CD8-positive, alpha-beta T cell (primary cell): ENCODE measurements at regions of chr19 and their contacts with region 1.

Region 1: DNA sequence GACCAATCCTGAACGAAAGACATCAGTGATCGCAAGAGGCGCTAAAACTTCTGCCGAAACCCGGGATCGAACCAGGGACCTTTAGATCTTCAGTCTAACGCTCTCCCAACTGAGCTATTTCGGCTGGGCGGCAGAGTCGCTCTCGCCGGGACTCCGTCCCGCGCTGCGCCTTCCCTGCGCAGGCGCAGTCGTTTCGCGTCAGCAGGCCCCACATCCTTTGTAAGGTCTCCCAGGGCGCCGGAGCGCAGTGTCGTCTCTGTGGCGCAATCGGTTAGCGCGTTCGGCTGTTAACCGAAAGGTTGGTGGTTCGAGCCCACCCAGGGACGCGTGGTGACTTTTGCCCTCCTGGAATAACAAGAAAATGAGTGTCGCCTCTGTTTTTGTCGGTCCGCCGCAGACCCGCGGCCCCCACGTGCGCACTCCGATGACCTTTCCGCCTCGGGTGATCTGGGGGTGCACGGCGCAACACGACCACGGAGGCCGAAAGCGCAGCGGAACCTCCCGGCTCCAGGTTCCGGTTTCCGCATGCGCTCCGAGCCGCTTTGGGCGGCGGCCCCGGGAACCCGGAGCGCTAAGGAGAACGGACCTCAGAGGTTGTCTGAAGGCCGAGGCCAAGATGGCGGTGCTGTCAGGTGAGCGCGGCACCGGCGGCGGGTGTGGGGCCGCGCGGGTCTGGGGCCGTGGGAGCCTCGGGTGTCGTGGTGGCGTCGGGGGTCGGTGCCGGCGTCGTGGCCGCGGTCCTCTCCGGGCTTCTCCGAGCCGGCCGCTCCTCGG is at the start of gene NDUFS7:
- DNase-seq: peak; percentile 91 to 100 (median 95)
- ATAC-seq: peak; percentile 90
- H3K4me3 ChIP-seq: peak within 1 kb of the TSS; percentile 93 to 94
- H3K4me3 Mint-ChIP-seq: peak within 1 kb of the TSS; percentile 94
- H3K27ac ChIP-seq: peak within 1 kb of the TSS; percentile 72 to 91
- H3K27ac Mint-ChIP-seq: peak within 1 kb of the TSS; percentile 99
- H3K4me1 ChIP-seq: peaks cover 10% of the 10 kb centered on the region
- H3K4me1 Mint-ChIP-seq: peaks cover 16% of the 10 kb centered on the region
- H3K27me3 ChIP-seq: no peaks in the 10 kb centered on the region
- H3K27me3 Mint-ChIP-seq: peaks cover 2% of the 10 kb centered on the region
- CTCF ChIP-seq: no peak
- total RNA-seq, gene NDUFS7: 38.6 to 41.1 TPM

Region 2: DNA sequence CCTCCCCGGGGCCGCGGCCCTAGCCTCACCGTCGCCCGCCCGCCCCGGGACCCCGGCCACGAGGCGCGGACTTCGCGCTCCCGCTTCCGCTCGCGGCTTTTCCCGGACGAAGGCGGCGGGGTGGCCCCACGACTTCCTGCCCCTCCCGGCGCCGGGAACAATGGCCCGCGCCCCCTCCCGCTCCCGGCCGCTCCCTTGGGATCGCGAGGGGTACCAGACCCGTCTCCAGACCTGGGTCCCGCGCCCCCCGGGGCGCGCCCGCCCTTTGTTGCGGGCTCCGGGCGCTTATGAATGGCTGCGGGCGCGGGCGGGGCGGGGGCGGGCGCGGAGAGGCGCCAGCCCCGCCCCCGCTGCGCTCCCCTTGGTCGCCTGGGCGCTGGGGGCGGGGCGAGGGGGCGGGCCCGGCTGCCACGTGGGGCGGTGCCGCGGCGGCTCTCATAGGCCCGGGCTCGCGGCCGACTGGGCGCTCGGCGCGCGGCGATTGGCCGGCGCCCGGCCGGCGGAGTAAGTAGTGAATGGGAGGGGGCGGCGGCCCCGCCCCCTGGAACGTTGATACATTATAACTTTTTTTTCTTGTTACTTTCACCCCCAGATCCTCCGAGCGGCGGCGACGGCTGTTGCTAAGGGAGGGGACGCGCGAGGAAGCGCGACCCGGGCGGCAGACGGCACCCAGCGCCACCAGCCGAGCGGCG is 134.1 kb before region 1 on chr19:
- CTCF ChIA-PET with region 1: interaction called, 4 read pairs
- POLR2A ChIA-PET with region 1: no interaction called
- intact Hi-C with region 1: loop called in 1 of 2 experiments (anchors 2 kb)
- DNase-seq: peak; percentile 89 to 98 (median 95)
- ATAC-seq: peak; percentile 55
- H3K4me3 ChIP-seq: peak overlapping the region; percentile 86 to 88
- H3K4me3 Mint-ChIP-seq: peak overlapping the region; percentile 87
- H3K27ac ChIP-seq: peak overlapping the region; percentile 83 to 84
- H3K27ac Mint-ChIP-seq: peak overlapping the region; percentile 88
- H3K4me1 ChIP-seq: peaks cover 31% of the 10 kb centered on the region
- H3K4me1 Mint-ChIP-seq: peaks cover 10% of the 10 kb centered on the region
- H3K27me3 ChIP-seq: no peaks in the 10 kb centered on the region
- H3K27me3 Mint-ChIP-seq: no peaks in the 10 kb centered on the region
- CTCF ChIP-seq: no peak

Region 3: GRCh38 chr19:1355568-1356507 is 27.7 kb before region 1 on chr19:
- CTCF ChIA-PET with region 1: no interaction called
- POLR2A ChIA-PET with region 1: no interaction called
- intact Hi-C with region 1: loop called (anchors 1 kb)
- DNase-seq: peak in 1 of 9 experiments; percentile 33
- ATAC-seq: no peak
- H3K4me3 ChIP-seq: peak overlapping the region; percentile 71 to 74
- H3K4me3 Mint-ChIP-seq: peak overlapping the region; percentile 85
- H3K27ac ChIP-seq: no peak overlapping the region
- H3K27ac Mint-ChIP-seq: peak overlapping the region; percentile 4
- H3K4me1 ChIP-seq: peaks cover 10% of the 10 kb centered on the region
- H3K4me1 Mint-ChIP-seq: peaks cover 12% of the 10 kb centered on the region
- H3K27me3 ChIP-seq: no peaks in the 10 kb centered on the region
- H3K27me3 Mint-ChIP-seq: no peaks in the 10 kb centered on the region
- CTCF ChIP-seq: no peak

Region 4: DNA sequence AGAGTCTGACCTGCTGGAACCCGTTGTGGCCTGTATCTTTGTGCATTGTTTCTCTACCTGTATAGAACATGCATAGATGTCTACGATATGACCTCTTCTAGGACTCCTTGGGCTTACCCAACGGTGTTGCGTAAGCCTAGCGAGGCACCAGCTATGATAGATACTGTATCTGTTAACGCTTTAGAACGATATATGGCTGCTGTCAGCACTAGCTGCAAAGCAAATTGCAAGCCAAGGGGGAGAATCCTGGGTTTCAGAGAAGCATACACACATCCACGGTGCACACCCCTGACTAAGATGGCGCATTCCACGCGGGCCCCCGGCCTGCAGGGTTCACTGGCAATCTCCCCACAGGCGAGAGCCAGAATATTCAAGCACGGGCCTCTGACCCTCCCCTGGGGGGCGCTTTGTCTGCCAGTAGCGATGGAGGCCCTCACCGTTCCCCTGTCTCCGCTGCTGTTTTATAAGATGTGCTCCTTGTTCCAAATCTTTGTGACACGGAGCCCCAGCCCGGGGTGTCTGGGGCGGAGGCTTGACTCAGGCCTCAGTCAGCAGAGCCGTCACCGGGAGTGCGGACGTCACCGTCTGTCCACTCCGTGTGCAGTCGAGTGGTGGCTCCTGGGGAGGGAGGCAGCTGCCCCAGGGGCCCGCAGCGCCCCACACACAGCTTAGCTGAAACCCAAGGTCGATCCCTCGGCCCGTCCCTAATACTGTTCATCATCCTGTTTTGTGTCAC is 41.8 kb after region 1 on chr19:
- CTCF ChIA-PET with region 1: no interaction called
- POLR2A ChIA-PET with region 1: no interaction called
- intact Hi-C with region 1: no loop called
- DNase-seq: no peak
- ATAC-seq: no peak
- H3K4me3 ChIP-seq: no peak overlapping the region
- H3K4me3 Mint-ChIP-seq: no peak overlapping the region
- H3K27ac ChIP-seq: no peak overlapping the region
- H3K27ac Mint-ChIP-seq: no peak overlapping the region
- H3K4me1 ChIP-seq: no peaks in the 10 kb centered on the region
- H3K4me1 Mint-ChIP-seq: peaks cover 3% of the 10 kb centered on the region
- H3K27me3 ChIP-seq: no peaks in the 10 kb centered on the region
- H3K27me3 Mint-ChIP-seq: no peaks in the 10 kb centered on the region
- CTCF ChIP-seq: no peak

Region 5: DNA sequence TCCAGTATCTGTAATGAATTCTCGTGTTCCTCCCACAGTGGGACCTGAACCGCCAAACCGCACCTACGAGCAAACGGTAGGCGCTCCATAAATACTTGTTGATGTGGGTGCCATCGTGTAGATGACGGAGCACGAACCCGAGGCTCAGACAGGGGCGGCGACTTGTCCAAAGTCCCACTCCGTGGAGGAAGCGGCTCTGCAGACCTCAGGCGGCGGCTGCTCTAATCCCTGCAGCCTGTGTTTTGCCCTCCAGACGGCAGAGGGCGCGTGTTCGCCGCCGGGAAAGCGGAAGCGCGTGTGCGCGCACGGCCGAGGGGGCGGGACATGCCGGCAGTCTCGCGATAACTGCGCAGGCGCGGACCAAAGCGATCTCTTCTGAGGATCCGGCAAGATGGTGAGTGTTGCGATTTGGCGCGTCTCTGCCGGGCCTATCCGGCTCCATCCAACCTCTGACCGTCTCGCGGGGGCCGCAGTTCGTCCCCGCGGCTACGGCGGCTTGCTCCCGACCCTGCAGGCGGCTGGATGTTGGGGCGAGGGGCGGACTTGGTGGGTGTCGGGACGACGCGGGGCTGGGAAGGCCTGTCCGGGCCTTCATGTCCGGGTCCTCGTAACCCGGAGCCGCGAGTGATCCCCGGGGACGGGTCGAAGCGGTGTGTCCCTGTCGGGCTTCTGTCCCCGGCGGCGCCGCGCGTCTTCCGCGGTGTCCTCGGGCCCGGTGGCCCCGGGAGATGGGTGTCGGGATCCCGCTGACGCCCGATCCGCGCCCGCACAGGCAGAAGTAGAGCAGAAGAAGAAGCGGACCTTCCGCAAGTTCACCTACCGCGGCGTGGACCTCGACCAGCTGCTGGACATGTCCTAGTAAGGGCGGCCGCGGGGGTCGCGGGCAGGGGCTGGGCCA is 54.8 kb after region 1 on chr19 and contains the start of gene RPS15:
- CTCF ChIA-PET with region 1: no interaction called
- POLR2A ChIA-PET with region 1: interaction called, 3 read pairs
- intact Hi-C with region 1: loop called in 1 of 2 experiments (anchors 1 kb)
- DNase-seq: peak; percentile 92 to 98 (median 96)
- ATAC-seq: peak; percentile 90
- H3K4me3 ChIP-seq: peak within 1 kb of the TSS; percentile 79 to 95
- H3K4me3 Mint-ChIP-seq: peak within 1 kb of the TSS; percentile 98
- H3K27ac ChIP-seq: peak within 1 kb of the TSS; percentile 82 to 93
- H3K27ac Mint-ChIP-seq: peak within 1 kb of the TSS; percentile 100
- H3K4me1 ChIP-seq: peaks cover 22% of the 10 kb centered on the region
- H3K4me1 Mint-ChIP-seq: peaks cover 21% of the 10 kb centered on the region
- H3K27me3 ChIP-seq: no peaks in the 10 kb centered on the region
- H3K27me3 Mint-ChIP-seq: no peaks in the 10 kb centered on the region
- CTCF ChIP-seq: peak; percentile 95
- total RNA-seq, gene RPS15: 2,066 to 2,071 TPM

Region 6: DNA sequence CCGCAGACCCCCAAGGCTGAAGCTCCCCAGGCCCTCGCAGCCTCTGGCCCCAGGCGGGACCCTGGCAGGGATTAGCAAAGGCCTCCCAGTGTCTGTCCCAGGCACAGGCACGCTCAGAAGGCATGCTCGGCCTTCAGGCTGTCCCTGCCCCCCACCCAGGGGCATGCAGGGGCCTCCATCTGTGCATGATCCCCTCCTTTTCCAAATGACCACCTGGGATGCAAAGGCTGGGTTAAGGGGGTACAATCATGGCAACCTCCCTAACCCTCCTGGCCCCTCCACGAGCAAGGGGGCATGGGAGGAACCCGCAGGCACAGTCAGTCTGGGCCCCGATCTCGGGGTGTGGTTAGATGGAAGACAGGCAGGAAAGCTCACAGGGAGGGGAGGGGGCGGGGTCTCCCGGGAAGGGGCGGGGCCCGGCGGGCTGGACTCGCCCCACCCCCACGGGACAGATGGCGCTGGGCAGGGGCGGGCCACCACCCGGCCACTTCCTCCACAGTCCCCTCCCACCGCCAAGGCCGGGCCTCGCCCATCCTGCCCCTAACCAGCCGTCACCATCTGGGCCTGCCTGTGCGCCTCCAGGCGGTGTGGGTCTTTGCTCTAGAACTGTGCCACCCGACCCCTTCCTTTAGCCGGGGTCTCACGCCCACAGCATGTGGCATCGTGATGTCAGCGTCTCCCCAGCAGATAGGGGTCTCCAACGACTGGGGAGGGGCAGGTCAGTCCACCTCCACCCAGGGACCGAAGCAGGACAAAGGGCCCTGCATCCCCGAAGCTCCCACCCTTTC is 471.7 kb after region 1 on chr19:
- CTCF ChIA-PET with region 1: no interaction called
- POLR2A ChIA-PET with region 1: no interaction called
- intact Hi-C with region 1: no loop called
- DNase-seq: peak; percentile 55 to 92 (median 78)
- ATAC-seq: peak; percentile 52
- H3K4me3 ChIP-seq: peak overlapping the region; percentile 66 to 85
- H3K4me3 Mint-ChIP-seq: peak overlapping the region; percentile 83
- H3K27ac ChIP-seq: peak overlapping the region; percentile 89 to 93
- H3K27ac Mint-ChIP-seq: peak overlapping the region; percentile 90
- H3K4me1 ChIP-seq: peaks cover 91% of the 10 kb centered on the region
- H3K4me1 Mint-ChIP-seq: peaks cover 52% of the 10 kb centered on the region
- H3K27me3 ChIP-seq: no peaks in the 10 kb centered on the region
- H3K27me3 Mint-ChIP-seq: no peaks in the 10 kb centered on the region
- CTCF ChIP-seq: no peak